ENCODE measurements at regions of chr17 and their contacts with region 1.

Region 1: DNA sequence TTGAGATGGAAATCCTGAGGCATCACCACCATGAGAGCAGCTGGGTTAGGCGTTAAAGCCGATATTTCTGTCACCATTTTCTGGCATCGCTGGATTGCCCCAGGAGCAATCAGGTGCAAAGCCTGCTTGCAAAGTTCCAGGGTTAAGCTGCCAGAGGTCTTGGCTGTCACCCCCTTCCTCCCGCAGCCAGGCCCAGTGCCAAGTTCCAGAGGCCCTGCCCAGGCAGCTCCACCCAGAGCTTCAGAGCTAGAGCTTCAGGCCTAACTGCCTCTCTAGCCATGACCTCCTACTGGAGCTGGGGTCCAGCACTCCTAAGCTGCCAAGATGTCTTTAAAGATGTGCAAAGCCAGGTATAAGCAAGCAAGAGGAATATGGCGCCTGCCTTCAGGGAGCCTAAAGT is 8.8 kb upstream of the TMEM238L start:
- DNase-seq: peak; percentile 92
- H3K4me3 ChIP-seq: no peak overlapping the region
- H3K27ac ChIP-seq: peak overlapping the region; percentile 64 to 83 (median 80)
- H3K4me1 ChIP-seq: peaks cover 3 to 41% (median 29%) of the 10 kb centered on the region in 4 donors
- H3K27me3 ChIP-seq: no peaks in the 10 kb centered on the region
- CTCF ChIP-seq: no peak
- EP300 ChIP-seq: no peak
- POLR2A ChIP-seq: no peak

Region 2: GRCh38 chr17:12164085-12164484 is 1351.4 kb after region 1 on chr17:
- in situ Hi-C with region 1: no loop called
- intact Hi-C with region 1: loop called (anchors 5 kb)
- DNase-seq: no peak
- H3K4me3 ChIP-seq: no peak overlapping the region
- H3K27ac ChIP-seq: no peak overlapping the region
- H3K4me1 ChIP-seq: no peaks in the 10 kb centered on the region
- H3K27me3 ChIP-seq: no peaks in the 10 kb centered on the region
- CTCF ChIP-seq: no peak
- EP300 ChIP-seq: no peak
- POLR2A ChIP-seq: no peak

Measured in transverse colon (tissue), 4 donors.